Mammary epithelial cell (primary cell): ENCODE measurements at regions of chr1 and their contacts with region 1.

Region 1: DNA sequence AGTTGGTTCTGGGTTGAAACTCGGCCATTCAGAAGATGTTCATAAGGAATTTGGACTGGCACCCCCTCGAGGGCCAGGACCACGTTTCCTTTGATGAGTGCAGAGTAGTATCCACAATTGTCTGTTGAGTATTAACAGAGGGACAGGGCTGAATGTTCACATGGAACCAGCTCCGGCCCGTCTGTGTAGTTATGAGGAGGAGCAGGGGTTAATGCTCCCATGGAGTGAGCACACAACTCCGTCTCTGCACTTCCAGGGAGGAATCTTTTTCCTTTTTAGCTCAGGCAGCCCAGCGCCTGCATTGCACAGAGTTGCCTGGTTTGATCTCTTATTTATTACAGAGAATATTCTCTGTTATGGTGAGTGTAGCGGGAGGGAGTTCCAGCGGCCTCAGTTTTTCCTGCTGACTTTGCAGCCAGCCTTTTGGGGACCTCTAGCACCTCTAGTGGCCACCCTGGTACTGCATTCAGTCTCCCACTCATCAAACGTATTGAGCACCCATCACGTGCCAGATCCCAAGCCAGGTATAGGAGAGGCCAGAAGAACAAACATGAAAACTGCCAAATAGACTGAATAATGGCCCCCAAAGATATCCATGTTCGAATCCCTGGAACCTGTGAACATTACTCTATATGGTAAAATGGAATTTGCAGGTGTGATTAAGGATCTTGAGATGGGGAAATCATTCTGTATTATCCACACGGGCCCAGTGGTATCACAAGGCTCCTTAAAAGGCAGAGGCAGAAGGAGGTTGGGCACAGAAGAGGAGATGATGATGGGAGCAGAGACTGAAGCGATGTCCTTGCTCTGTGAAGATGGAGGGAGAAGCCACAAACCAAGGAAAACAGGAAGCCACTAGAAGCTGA is 167.7 kb upstream of the CSF3R start:
- DNase-seq: peak; percentile 22
- H3K4me3 ChIP-seq: no peak overlapping the region
- H3K27ac ChIP-seq: no peak overlapping the region
- H3K4me1 ChIP-seq: no peaks in the 10 kb centered on the region
- H3K27me3 ChIP-seq: no peaks in the 10 kb centered on the region
- CTCF ChIP-seq: peak; percentile 92 to 97

Region 2: GRCh38 chr1:36576118-36576517 is 74.3 kb before region 1 on chr1:
- CTCF ChIA-PET with region 1: no interaction called
- dilution Hi-C with region 1: no loop called
- in situ Hi-C with region 1: no loop called
- intact Hi-C with region 1: loop called (anchors 1 kb)
- DNase-seq: peak; percentile 12
- H3K4me3 ChIP-seq: no peak overlapping the region
- H3K27ac ChIP-seq: no peak overlapping the region
- H3K4me1 ChIP-seq: no peaks in the 10 kb centered on the region
- H3K27me3 ChIP-seq: no peaks in the 10 kb centered on the region
- CTCF ChIP-seq: peak; percentile 79 to 95

Region 3: DNA sequence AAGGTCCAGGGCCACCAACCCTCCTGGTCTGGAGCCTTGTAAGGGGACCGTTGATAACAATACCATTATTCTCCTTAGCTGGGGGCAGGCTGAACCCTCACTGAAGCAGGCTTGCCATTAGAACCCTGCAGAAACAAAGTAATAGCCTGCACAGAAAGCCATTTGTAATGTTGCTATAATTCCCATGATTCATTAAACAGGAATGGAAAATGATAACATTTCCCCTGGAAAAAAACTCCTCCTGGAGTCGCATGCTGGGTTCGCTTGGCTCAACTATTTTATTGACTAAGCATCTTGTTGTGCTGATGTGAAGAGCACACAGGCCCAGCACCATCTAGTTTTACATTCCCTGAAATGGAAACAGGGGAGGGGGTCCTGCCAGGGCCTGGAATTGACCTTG is 12.2 kb before region 1 on chr1:
- CTCF ChIA-PET with region 1: no interaction called
- dilution Hi-C with region 1: no loop called
- in situ Hi-C with region 1: no loop called
- intact Hi-C with region 1: no loop called
- DNase-seq: no peak
- H3K4me3 ChIP-seq: no peak overlapping the region
- H3K27ac ChIP-seq: no peak overlapping the region
- H3K4me1 ChIP-seq: no peaks in the 10 kb centered on the region
- H3K27me3 ChIP-seq: no peaks in the 10 kb centered on the region
- CTCF ChIP-seq: no peak

Region 4: GRCh38 chr1:36691374-36691773 is 40.9 kb after region 1 on chr1:
- CTCF ChIA-PET with region 1: no interaction called
- dilution Hi-C with region 1: loop called (anchors 5 kb)
- in situ Hi-C with region 1: no loop called
- intact Hi-C with region 1: no loop called
- DNase-seq: peak; percentile 46
- H3K4me3 ChIP-seq: no peak overlapping the region
- H3K27ac ChIP-seq: no peak overlapping the region
- H3K4me1 ChIP-seq: peaks cover 4% of the 10 kb centered on the region
- H3K27me3 ChIP-seq: no peaks in the 10 kb centered on the region
- CTCF ChIP-seq: no peak